ENCODE measurements at regions of chr12 and their contacts with region 1.

Region 1: GRCh38 chr12:21697904-21698630 is 40.4 kb upstream of the LDHB start:
- DNase-seq: no peak
- ATAC-seq: no peak
- H3K4me3 ChIP-seq: peak overlapping the region; percentile 43
- H3K27ac ChIP-seq: no peak overlapping the region
- H3K4me1 ChIP-seq: no peaks in the 10 kb centered on the region
- H3K27me3 ChIP-seq: no peaks in the 10 kb centered on the region

Region 2: GRCh38 chr12:21566223-21566906 is 131.7 kb before region 1 on chr12:
- intact Hi-C with region 1: no loop called
- DNase-seq: no peak
- ATAC-seq: no peak
- H3K4me3 ChIP-seq: no peak overlapping the region
- H3K27ac ChIP-seq: no peak overlapping the region
- H3K4me1 ChIP-seq: no peaks in the 10 kb centered on the region
- H3K27me3 ChIP-seq: no peaks in the 10 kb centered on the region

Region 3: GRCh38 chr12:21580748-21581516 is 117.1 kb before region 1 on chr12:
- intact Hi-C with region 1: no loop called
- DNase-seq: no peak
- ATAC-seq: no peak
- H3K4me3 ChIP-seq: no peak overlapping the region
- H3K27ac ChIP-seq: no peak overlapping the region
- H3K4me1 ChIP-seq: no peaks in the 10 kb centered on the region
- H3K27me3 ChIP-seq: no peaks in the 10 kb centered on the region

Region 4: DNA sequence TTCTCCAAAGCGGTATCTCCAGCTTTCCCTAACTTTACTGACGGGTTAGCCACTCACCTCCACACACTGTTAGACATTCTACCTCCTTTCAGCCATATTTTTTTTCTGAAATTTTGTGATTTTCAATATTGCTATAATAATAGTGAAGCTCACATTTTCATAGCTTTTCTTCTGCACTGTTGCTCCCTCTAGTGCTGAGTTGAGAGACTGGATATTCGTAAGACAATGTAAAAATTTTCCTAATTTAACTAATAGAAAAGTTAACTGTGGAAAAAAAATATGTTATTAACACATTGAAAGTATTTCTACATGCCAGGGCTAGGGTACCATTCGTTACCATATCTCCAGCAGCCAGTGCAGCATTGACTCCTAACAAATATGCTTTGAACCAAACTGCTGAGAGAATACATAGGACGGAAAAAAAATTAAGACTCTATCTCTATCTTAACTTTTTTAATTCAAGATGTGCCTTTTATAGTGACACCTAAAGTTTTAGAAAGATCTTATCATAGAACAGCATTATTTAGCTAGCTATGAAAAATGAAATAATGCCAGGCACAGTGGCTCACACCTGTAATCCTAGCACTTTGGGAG is 291.8 kb after region 1 on chr12:
- intact Hi-C with region 1: loop called in 3 of 4 experiments (anchors 5 kb)
- DNase-seq: no peak
- ATAC-seq: no peak
- H3K4me3 ChIP-seq: no peak overlapping the region
- H3K27ac ChIP-seq: no peak overlapping the region
- H3K4me1 ChIP-seq: no peaks in the 10 kb centered on the region
- H3K27me3 ChIP-seq: no peaks in the 10 kb centered on the region

Region 5: DNA sequence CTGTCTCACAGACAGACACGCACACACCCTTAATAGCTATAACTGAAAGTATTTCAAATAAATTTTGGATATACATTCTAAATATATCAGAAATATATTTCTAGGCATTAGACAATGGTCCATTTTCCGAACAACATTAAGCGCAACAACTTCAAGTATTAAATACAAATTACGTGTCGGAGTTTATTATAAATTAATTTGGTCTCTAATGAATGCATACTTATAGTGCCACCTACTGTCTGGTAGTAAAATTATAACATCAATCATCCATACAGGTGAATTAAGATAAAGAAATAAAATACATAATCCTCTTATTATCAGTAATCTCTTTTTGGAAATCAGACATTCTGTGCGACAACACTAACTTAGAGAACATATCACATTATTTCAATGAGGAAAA is 320.8 kb after region 1 on chr12:
- intact Hi-C with region 1: loop called in 1 of 4 experiments (anchors 5 kb)
- DNase-seq: no peak
- ATAC-seq: no peak
- H3K4me3 ChIP-seq: no peak overlapping the region
- H3K27ac ChIP-seq: no peak overlapping the region
- H3K4me1 ChIP-seq: peaks cover 2% of the 10 kb centered on the region
- H3K27me3 ChIP-seq: no peaks in the 10 kb centered on the region